ENCODE measurements at regions of chr7 and their contacts with region 1.

Region 1: GRCh38 chr7:123494193-123494796 is 40.1 kb downstream of the IQUB start:
- DNase-seq: no peak
- ATAC-seq: peak in 1 of 2 donors; percentile 56
- H3K4me3 ChIP-seq: no peak overlapping the region
- H3K27ac ChIP-seq: no peak overlapping the region
- H3K4me1 ChIP-seq: peaks cover 0 to 6% of the 10 kb centered on the region in 2 donors
- H3K27me3 ChIP-seq: no peaks in the 10 kb centered on the region
- CTCF ChIP-seq: peak; percentile 31 to 81 (median 67)
- POLR2A ChIP-seq: no peak

Region 2: DNA sequence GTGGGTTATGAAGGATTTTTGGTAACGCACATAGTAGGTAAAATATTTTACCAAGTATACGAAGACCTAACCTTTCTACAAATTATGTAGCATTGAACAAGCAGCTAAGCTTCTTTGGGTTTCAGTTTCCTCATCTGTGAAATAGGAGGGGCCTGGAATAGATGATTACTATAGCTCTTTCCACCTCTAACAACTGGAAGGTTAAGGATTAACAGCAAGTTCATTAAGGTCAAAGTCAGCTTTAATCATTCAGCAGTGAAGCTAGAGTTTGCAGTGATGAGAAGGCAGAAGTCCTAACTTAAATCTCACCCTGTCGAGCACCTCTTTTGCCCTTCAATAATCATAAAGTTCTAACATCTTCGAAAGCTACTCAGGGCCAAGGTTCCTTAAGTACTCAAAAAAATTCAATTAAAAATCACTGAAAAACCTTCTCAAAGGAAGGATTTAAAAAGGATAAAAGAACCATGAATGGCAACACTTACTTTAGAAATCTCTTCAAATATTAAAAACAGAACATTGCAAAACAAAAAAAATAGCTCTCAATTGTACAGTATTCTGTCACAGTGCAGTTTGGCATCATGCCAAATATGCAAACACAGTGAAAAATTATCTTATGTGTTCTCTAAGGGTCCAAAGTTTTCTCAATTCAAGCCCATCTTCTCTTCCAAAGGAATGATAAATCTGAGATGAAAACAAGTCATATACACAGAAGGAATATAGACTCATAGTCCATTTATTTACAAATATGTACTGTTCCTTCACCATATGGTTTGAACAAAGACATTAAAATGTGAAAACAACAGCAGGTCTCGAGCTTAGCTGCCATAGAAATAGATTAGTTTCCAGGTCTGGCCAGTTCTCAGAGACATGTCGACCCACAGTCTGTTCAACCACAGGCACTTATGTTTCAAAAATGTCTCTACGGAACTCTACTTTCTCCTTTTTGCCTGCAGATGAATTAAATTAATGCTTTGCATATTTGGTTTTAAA is 142.5 kb before region 1 on chr7:
- in situ Hi-C with region 1: no loop called
- intact Hi-C with region 1: no loop called
- DNase-seq: no peak
- ATAC-seq: no peak
- H3K4me3 ChIP-seq: no peak overlapping the region
- H3K27ac ChIP-seq: no peak overlapping the region
- H3K4me1 ChIP-seq: no peaks in the 10 kb centered on the region
- H3K27me3 ChIP-seq: no peaks in the 10 kb centered on the region
- CTCF ChIP-seq: no peak
- POLR2A ChIP-seq: no peak

Region 3: GRCh38 chr7:123534383-123535260 is 40.3 kb after region 1 on chr7 and contains the start of gene IQUB:
- in situ Hi-C with region 1: loop called in 1 of 4 experiments (anchors 5 kb)
- intact Hi-C with region 1: loop called (anchors 2 kb)
- DNase-seq: peak; percentile 98
- ATAC-seq: peak; percentile 92 to 93
- H3K4me3 ChIP-seq: peak within 1 kb of the TSS; percentile 67 to 76 (median 72)
- H3K27ac ChIP-seq: peak within 1 kb of the TSS; percentile 89 to 93 (median 92)
- H3K4me1 ChIP-seq: peaks cover 9 to 17% of the 10 kb centered on the region in 2 donors
- H3K27me3 ChIP-seq: peaks cover 0 to 5% (median 2%) of the 10 kb centered on the region in 3 donors
- CTCF ChIP-seq: no peak
- POLR2A ChIP-seq: peak; percentile 47 to 50
- total RNA-seq, gene IQUB: 0.15 to 0.42 (median 0.26) TPM in 3 of 4 donors, not detected in the other

Region 4: GRCh38 chr7:123995617-123996326 is 501.5 kb after region 1 on chr7:
- in situ Hi-C with region 1: no loop called
- intact Hi-C with region 1: no loop called
- DNase-seq: no peak
- ATAC-seq: no peak
- H3K4me3 ChIP-seq: no peak overlapping the region
- H3K27ac ChIP-seq: no peak overlapping the region
- H3K4me1 ChIP-seq: peaks cover 0 to 5% of the 10 kb centered on the region in 2 donors
- H3K27me3 ChIP-seq: no peaks in the 10 kb centered on the region
- CTCF ChIP-seq: no peak
- POLR2A ChIP-seq: no peak

Measured in gastrocnemius medialis (tissue), 4 donors.